ENCODE measurements at regions of chr12 and their contacts with region 1.

Region 1: DNA sequence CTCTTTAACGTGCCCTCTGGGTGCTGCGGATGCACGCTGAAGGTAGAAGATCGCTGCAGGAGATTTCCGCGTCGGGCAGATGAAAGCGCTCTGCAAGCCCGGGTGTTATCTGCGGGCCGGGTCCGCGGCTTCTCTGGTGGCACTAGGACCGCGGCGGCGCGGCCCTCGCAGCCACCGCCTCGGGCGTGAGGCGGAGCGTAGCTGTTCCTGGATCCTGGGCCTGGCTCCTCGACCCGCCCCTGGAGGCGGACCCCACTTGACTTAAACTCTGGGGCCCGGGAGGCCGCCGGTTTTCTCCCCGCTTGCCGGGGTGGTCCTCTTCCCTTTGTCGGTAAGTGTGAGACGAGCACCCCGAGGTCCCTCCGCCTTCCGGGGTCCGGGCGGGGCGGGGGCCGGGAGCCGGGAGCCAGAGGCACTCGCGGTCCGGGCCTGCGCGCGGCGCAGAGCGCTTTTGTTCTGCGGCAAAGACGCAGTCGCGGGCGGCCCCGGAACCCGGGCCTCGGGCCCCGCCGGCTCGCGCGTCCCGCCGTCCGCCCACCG is at the start of gene RESF1:
- DNase-seq: peak; percentile 90
- ATAC-seq: peak; percentile 83
- H3K4me3 Mint-ChIP-seq: peak within 1 kb of the TSS; percentile 89
- H3K27ac Mint-ChIP-seq: peak within 1 kb of the TSS; percentile 97
- H3K4me1 Mint-ChIP-seq: peaks cover 72% of the 10 kb centered on the region
- H3K27me3 Mint-ChIP-seq: no peaks in the 10 kb centered on the region
- total RNA-seq, gene RESF1: 52.0 to 78.8 TPM

Region 2: GRCh38 chr12:31659087-31659933 is 299.9 kb before region 1 on chr12 and contains the start of gene ETFBKMT:
- CTCF ChIA-PET with region 1: interaction called, 5 read pairs
- POLR2A ChIA-PET with region 1: interaction called, 12 read pairs
- intact Hi-C with region 1: loop called (anchors 1 to 2 kb)
- DNase-seq: peak; percentile 96
- ATAC-seq: peak; percentile 99
- H3K4me3 Mint-ChIP-seq: peak within 1 kb of the TSS; percentile 87
- H3K27ac Mint-ChIP-seq: peak within 1 kb of the TSS; percentile 100
- H3K4me1 Mint-ChIP-seq: peaks cover 13% of the 10 kb centered on the region
- H3K27me3 Mint-ChIP-seq: no peaks in the 10 kb centered on the region
- total RNA-seq, gene ETFBKMT: 0.35 to 1.4 TPM

Region 3: DNA sequence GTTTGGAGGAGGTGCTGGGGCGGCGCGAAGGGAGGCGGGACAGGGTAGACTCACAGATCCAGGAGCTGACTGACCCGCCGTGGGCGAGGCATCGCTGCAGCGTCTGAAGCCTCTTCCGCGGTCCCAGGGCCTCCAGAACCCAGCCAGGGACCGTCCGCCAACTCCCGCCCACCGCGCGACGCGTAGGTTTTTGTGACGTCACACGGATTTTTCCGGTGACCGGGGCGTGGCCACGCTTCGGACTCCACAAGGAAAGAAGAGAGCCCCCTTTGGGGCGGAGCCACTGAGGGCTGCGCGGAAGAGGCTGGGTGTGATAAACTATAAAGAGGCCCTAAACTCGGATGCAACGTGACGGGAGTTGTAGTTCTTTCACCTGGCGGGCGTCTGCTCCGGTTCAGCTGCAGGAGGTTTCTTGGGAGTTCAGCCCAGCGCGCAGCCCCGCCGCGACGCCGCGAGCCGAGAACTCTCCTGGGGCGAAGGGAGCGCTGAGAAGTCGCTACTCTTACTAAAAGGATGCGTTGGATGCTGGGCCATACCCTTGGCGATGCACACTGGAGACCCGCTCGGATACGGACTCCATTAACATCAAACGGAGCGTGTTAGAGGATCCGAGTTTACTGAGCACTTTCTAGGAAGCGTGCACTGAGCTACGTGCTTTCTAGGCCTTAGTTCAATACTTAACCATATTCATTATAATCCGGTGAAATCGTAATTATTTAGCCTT is 230.2 kb before region 1 on chr12 and contains the start of gene AMN1:
- CTCF ChIA-PET with region 1: no interaction called
- POLR2A ChIA-PET with region 1: interaction called, 3 read pairs
- intact Hi-C with region 1: loop called (anchors 1 to 2 kb)
- DNase-seq: peak; percentile 99
- ATAC-seq: peak; percentile 92
- H3K4me3 Mint-ChIP-seq: peak within 1 kb of the TSS; percentile 89
- H3K27ac Mint-ChIP-seq: peak within 1 kb of the TSS; percentile 99
- H3K4me1 Mint-ChIP-seq: peaks cover 52% of the 10 kb centered on the region
- H3K27me3 Mint-ChIP-seq: no peaks in the 10 kb centered on the region
- total RNA-seq, gene AMN1: 5.1 to 5.8 TPM

Region 4: DNA sequence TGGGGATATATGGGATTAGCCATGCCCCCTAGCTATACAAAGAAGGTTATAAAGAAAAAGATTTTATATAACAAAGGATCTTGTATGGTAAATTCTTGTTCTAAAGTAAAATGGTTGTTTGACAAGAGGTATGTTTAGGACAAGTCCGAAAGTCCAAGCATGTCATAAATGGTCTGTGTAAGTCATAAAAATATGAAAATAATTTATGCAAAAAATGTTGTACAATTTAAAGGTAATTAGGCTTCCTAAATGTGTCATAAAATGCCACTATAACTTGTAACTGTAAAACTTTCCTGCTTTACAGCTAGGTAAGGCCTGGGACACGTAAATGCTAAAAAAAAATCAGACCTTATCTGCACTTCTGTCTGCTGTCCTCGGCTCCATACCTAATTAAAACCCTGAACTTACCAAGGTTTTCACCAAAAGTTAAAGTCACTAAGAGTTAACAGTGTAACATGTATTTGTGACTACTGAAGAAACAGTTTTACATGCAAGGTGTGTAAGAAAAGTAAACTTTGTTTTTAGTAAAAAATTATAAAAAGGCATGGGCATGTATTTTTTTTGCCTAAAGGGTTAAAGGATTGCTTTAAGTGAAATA is 110.0 kb before region 1 on chr12:
- CTCF ChIA-PET with region 1: no interaction called
- POLR2A ChIA-PET with region 1: no interaction called
- intact Hi-C with region 1: no loop called
- DNase-seq: no peak
- ATAC-seq: no peak
- H3K4me3 Mint-ChIP-seq: no peak overlapping the region
- H3K27ac Mint-ChIP-seq: no peak overlapping the region
- H3K4me1 Mint-ChIP-seq: no peaks in the 10 kb centered on the region
- H3K27me3 Mint-ChIP-seq: no peaks in the 10 kb centered on the region

Region 5: GRCh38 chr12:31989571-31990362 is 30.5 kb after region 1 on chr12:
- CTCF ChIA-PET with region 1: interaction called, 7 read pairs
- POLR2A ChIA-PET with region 1: interaction called, 5 read pairs
- intact Hi-C with region 1: loop called in 1 of 2 experiments (anchors 5 kb)
- DNase-seq: peak; percentile 27
- ATAC-seq: peak; percentile 44
- H3K4me3 Mint-ChIP-seq: no peak overlapping the region
- H3K27ac Mint-ChIP-seq: peak overlapping the region; percentile 89
- H3K4me1 Mint-ChIP-seq: peaks cover 58% of the 10 kb centered on the region
- H3K27me3 Mint-ChIP-seq: no peaks in the 10 kb centered on the region

Region 6: DNA sequence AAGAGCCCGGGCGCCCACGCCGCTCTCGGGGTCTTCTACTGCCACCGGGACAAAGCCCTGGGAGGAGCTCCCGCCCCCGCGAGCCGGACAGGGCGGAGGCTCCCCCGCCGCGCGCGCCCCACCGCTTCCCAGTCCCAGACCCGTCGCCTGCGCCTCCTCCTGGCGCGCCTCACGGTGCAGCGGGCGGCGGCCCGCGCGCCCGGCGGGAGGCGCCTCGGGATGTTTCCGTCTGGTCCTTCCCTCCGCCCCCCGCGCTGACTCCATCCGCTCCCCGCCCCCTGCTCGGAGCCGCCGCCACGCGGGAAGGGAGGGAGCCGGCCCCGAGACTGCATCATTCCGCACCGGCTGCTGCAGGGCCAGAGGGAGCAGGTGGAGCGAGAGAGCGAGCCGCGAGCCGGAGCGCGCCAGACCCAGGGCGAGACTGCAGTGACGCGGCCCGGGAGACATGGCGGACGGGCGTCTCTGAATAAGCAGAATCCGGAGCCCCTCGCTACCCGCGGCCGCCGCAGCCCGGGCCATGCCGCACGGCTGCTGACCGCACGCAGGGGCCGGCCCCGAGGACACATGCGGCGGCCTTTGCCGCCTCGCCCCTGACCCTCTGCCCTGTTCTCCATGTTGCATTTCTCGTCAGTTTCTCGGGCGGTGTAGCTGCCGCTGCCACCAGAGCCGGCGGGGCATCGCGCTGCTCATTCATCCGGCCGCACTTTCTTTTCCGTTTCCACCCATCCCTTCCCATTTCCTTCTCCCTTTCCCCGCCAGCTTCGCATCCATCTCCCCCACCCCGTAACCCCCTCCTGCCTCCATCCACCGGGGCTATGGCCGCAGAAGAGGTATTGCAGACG is 147.5 kb after region 1 on chr12 and contains the start of gene BICD1:
- CTCF ChIA-PET with region 1: no interaction called
- POLR2A ChIA-PET with region 1: no interaction called
- intact Hi-C with region 1: loop called in 1 of 2 experiments (anchors 2 kb)
- DNase-seq: peak; percentile 86
- ATAC-seq: peak; percentile 83
- H3K4me3 Mint-ChIP-seq: peak within 1 kb of the TSS; percentile 83
- H3K27ac Mint-ChIP-seq: peak within 1 kb of the TSS; percentile 92
- H3K4me1 Mint-ChIP-seq: peaks cover 20% of the 10 kb centered on the region
- H3K27me3 Mint-ChIP-seq: peaks cover 2% of the 10 kb centered on the region
- total RNA-seq, gene BICD1: 12.7 to 15.1 TPM

Region 7: GRCh38 chr12:32186814-32187515 is 227.7 kb after region 1 on chr12:
- CTCF ChIA-PET with region 1: no interaction called
- POLR2A ChIA-PET with region 1: no interaction called
- intact Hi-C with region 1: no loop called
- DNase-seq: no peak
- ATAC-seq: no peak
- H3K4me3 Mint-ChIP-seq: no peak overlapping the region
- H3K27ac Mint-ChIP-seq: no peak overlapping the region
- H3K4me1 Mint-ChIP-seq: no peaks in the 10 kb centered on the region
- H3K27me3 Mint-ChIP-seq: no peaks in the 10 kb centered on the region

Region 8: DNA sequence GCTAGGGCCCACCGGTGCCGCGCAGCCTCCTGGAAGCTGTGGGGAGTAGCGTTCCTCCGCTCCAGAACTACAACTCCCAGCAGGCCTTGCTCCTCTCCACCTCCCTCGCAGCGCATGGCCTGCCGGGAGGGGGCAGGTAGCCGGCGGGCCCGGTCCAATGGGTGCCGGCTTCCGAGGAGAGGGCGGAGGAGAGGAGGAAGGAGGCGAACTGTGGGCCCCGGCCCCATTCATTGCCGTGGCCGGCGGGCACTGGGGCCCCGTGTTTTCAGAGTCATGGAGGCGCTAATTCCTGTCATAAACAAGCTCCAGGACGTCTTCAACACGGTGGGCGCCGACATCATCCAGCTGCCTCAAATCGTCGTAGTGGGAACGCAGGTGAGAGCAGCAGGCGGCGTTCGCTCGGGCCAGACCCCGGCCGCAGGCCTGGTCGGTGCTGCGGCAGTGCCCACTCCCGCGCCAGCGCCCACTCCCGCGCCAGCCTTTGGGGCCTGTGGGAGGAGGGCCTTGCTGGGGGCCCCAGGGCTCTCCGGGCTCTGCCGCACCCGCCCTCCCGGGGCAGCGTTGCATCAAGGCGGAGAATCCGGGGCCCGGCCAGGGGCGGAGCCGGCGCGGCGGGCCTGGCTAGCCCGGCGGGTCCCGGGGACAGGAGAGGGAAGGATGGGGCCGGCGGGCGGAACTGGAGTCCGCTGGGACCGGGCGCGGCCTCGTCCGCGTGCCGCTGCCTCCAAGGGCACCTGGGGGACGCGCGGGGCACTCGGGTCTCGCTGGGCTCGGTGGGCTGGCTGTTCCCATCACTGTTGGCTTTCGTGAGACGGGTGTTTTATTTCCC is 720.1 kb after region 1 on chr12 and contains the start of gene DNM1L:
- CTCF ChIA-PET with region 1: no interaction called
- POLR2A ChIA-PET with region 1: no interaction called
- intact Hi-C with region 1: loop called (anchors 10 kb)
- DNase-seq: peak; percentile 96
- ATAC-seq: peak; percentile 99
- H3K4me3 Mint-ChIP-seq: peak within 1 kb of the TSS; percentile 84
- H3K27ac Mint-ChIP-seq: peak within 1 kb of the TSS; percentile 89
- H3K4me1 Mint-ChIP-seq: peaks cover 21% of the 10 kb centered on the region
- H3K27me3 Mint-ChIP-seq: no peaks in the 10 kb centered on the region
- total RNA-seq, gene DNM1L: 67.1 to 68.5 TPM